ENCODE measurements at regions of chrX and their contacts with region 1.

Region 1: GRCh38 chrX:132821974-132822633 is 136.3 kb downstream of the HS6ST2 start:
- DNase-seq: no peak
- H3K4me3 ChIP-seq: no peak overlapping the region
- H3K27ac ChIP-seq: no peak overlapping the region
- H3K4me1 ChIP-seq: no peaks in the 10 kb centered on the region
- H3K27me3 ChIP-seq: peaks cover 0 to 35% of the 10 kb centered on the region in 2 donors
- CTCF ChIP-seq: no peak
- POLR2A ChIP-seq: no peak

Region 2: GRCh38 chrX:132848307-132848970 is 26.3 kb after region 1 on chrX:
- intact Hi-C with region 1: loop called (anchors 2 kb)
- DNase-seq: no peak
- H3K4me3 ChIP-seq: no peak overlapping the region
- H3K27ac ChIP-seq: no peak overlapping the region
- H3K4me1 ChIP-seq: no peaks in the 10 kb centered on the region
- H3K27me3 ChIP-seq: peaks cover 0 to 43% of the 10 kb centered on the region in 2 donors
- CTCF ChIP-seq: no peak
- POLR2A ChIP-seq: no peak

Region 3: DNA sequence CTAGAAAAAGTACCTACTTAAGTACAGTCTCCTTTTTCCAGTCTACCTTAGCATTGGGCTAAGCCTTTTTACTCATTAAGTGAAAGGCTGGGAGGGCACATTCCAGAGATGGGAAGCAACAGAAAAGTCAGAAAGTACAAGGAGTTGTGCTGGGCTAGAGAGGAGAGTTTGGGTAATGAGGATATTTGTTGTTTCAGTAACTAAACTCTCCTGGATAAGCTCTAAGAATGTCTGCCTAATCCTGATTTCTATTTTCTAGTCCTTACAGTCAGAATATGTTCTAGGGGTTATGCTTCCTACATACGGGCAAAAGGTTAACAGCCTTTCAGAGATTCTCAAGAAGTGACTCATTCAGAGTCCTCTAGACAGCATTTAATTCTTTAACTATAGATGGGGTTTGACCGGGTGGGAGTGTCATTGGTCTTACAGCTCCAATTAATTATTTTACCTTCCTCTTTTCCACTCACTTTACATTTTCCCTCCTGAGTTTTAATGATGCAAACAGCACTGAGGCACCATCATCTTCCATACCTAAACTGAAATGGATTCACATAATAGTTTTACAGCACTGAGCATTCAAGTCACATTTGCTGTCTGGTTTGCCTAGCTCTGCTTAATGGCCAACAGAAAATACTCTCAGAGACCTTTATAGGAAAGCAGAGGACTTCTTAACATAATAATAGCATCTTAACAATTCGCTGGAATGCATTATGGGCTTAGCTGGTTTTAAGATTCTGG is 231.9 kb after region 1 on chrX:
- intact Hi-C with region 1: no loop called
- DNase-seq: no peak
- H3K4me3 ChIP-seq: no peak overlapping the region
- H3K27ac ChIP-seq: no peak overlapping the region
- H3K4me1 ChIP-seq: no peaks in the 10 kb centered on the region
- H3K27me3 ChIP-seq: peaks cover 0 to 44% of the 10 kb centered on the region in 2 donors
- CTCF ChIP-seq: no peak
- POLR2A ChIP-seq: no peak